ENCODE measurements at regions of chr17 and their contacts with region 1.

Region 1: GRCh38 chr17:33888455-33888854 is 366.6 kb upstream of the CCL2 start:
- DNase-seq: peak; percentile 54 to 61 (median 55)
- ATAC-seq: no peak; the same call in 2 of the 3 replicates
- H3K4me3 ChIP-seq: no peak overlapping the region
- H3K27ac ChIP-seq: peak overlapping the region; percentile 65
- H3K4me1 ChIP-seq: peaks cover 22 to 58% of the 10 kb centered on the region in 2 experiments; a peak in 4 of 5 replicates
- H3K27me3 ChIP-seq: no peaks in the 10 kb centered on the region
- CTCF ChIP-seq: no peak
- EP300 ChIP-seq: no peak
- POLR2A ChIP-seq: no peak
- RAD21 ChIP-seq: no peak

Region 2: GRCh38 chr17:33832262-33832661 is 56.2 kb before region 1 on chr17:
- CTCF ChIA-PET with region 1: no interaction called
- POLR2A ChIA-PET with region 1: no interaction called
- in situ Hi-C with region 1: no loop called
- intact Hi-C with region 1: no loop called
- DNase-seq: no peak
- ATAC-seq: no peak
- H3K4me3 ChIP-seq: no peak overlapping the region
- H3K27ac ChIP-seq: no peak overlapping the region
- H3K4me1 ChIP-seq: no peaks in the 10 kb centered on the region; a peak in 2 of 5 replicates
- H3K27me3 ChIP-seq: peaks cover 0 to 2% of the 10 kb centered on the region in 2 experiments; a peak in 1 of 5 replicates
- CTCF ChIP-seq: no peak
- EP300 ChIP-seq: no peak
- POLR2A ChIP-seq: no peak
- RAD21 ChIP-seq: no peak

Region 3: GRCh38 chr17:33901085-33901484 is 12.6 kb after region 1 on chr17:
- CTCF ChIA-PET with region 1: no interaction called
- POLR2A ChIA-PET with region 1: interaction called, 21 read pairs
- in situ Hi-C with region 1: no loop called
- intact Hi-C with region 1: loop called (anchors 2 kb)
- DNase-seq: peak in 1 of 4 experiments; percentile 26
- ATAC-seq: no peak
- H3K4me3 ChIP-seq: no peak overlapping the region
- H3K27ac ChIP-seq: no peak overlapping the region
- H3K4me1 ChIP-seq: peaks cover 34 to 63% of the 10 kb centered on the region in 2 experiments; a peak in 4 of 5 replicates
- H3K27me3 ChIP-seq: no peaks in the 10 kb centered on the region
- CTCF ChIP-seq: no peak
- EP300 ChIP-seq: peak; percentile 23; the same call in 1 of the 2 replicates
- POLR2A ChIP-seq: no peak
- RAD21 ChIP-seq: no peak

Measured in K562 (cell line).